ENCODE measurements at regions of chr12 and their contacts with region 1.

Region 1: GRCh38 chr12:111313833-111314259 is 55.0 kb downstream of the PHETA1 start:
- DNase-seq: peak; percentile 72 to 90
- H3K4me3 ChIP-seq: no peak overlapping the region
- H3K4me1 ChIP-seq: 0 out of 2 replicates have a peak, but pooled peaks cover 2% of the 10 kb centered on the region
- H3K27me3 ChIP-seq: no peaks in the 10 kb centered on the region

Region 2: GRCh38 chr12:110780448-110780847 is 533.4 kb before region 1 on chr12:
- in situ Hi-C with region 1: no loop called
- DNase-seq: no peak
- H3K4me3 ChIP-seq: no peak overlapping the region
- H3K4me1 ChIP-seq: no peaks in the 10 kb centered on the region
- H3K27me3 ChIP-seq: no peaks in the 10 kb centered on the region

Region 3: DNA sequence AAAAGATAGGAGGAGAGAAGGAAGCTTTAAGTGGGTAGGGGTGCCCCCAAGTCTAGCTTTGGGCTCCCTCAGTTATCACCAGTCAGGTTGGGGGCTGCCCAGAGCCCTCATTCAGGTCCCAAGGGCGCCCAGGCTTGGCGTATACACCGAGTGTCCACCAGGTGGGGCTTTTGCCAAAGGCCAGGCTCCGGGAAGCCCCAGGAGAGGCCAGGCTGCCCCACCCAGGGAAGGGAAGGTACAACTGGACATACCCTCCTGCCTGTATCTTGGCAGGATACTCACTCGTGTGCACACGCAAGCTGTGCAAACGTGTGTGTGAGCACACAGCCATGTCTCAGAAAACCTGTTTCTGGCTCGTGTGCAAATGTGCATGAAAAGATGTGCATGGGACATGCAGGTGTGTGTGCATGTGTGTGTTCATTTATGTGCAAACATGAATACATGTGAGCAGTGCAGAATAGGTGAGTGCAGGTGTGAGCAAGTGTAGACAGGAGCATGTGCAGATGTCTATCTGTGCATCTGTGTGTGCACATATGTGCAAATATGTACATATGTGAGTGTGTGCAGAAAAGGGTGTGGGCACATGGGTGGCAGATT is 289.5 kb before region 1 on chr12:
- in situ Hi-C with region 1: loop called (anchors 5 kb)
- DNase-seq: peak; percentile 43 to 85
- H3K4me3 ChIP-seq: no peak overlapping the region
- H3K4me1 ChIP-seq: peaks cover 3% of the 10 kb centered on the region
- H3K27me3 ChIP-seq: peaks cover 19% of the 10 kb centered on the region

Measured in HAP-1 (cell line).